Activated naive CD4-positive, alpha-beta T cell treated with anti-CD3 and anti-CD28 coated beads for 36 hours (primary cell): ENCODE measurements at regions of chr12 and their contacts with region 1.

Region 1: DNA sequence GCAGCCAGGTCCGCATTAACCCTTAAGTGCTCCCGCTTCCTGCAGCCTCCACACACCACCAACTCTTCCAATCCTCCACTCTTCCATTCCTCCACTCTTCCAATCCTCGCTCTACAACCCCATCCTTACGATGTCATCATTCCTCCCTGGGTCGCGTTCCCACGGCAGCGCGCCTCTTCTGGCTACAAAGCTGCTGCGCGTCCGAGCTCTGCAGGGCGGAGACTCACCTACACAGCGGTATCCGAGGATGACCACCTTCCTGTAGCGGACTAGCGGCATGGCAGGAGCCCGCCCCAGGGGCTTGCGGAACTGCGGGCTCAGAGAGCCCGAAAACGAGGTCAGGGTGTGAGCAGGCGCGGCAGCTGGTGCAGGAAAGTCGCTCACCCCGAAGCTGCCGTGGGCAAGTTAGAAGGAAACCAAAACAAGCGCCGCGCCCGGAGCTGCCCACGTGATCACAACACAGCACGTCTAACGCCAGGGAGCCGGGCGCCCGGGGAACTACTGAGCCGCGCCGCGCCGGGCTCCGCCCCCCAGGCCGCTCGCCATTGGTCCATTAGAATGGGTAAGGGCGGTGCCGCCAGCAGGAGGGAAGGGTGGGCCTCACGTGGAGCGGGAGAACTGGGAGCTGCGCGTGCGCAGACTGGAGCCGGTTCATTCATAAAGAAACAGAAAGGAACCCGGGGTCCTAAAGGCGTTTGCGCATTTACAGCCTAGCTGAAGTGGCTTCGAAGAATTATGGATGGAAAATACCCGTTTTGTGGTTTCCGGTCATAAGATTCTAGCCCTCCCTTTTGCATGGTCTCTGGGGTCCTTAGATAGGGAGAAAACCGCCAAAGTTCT is at the start of gene RHEBL1:
- DNase-seq: peak; percentile 100
- H3K4me3 Mint-ChIP-seq: peak within 1 kb of the TSS; percentile 99
- H3K27ac Mint-ChIP-seq: peak within 1 kb of the TSS; percentile 76
- H3K4me1 Mint-ChIP-seq: peaks cover 12% of the 10 kb centered on the region
- H3K27me3 Mint-ChIP-seq: no peaks in the 10 kb centered on the region
- total RNA-seq, gene RHEBL1: 11.8 to 15.2 TPM

Region 2: DNA sequence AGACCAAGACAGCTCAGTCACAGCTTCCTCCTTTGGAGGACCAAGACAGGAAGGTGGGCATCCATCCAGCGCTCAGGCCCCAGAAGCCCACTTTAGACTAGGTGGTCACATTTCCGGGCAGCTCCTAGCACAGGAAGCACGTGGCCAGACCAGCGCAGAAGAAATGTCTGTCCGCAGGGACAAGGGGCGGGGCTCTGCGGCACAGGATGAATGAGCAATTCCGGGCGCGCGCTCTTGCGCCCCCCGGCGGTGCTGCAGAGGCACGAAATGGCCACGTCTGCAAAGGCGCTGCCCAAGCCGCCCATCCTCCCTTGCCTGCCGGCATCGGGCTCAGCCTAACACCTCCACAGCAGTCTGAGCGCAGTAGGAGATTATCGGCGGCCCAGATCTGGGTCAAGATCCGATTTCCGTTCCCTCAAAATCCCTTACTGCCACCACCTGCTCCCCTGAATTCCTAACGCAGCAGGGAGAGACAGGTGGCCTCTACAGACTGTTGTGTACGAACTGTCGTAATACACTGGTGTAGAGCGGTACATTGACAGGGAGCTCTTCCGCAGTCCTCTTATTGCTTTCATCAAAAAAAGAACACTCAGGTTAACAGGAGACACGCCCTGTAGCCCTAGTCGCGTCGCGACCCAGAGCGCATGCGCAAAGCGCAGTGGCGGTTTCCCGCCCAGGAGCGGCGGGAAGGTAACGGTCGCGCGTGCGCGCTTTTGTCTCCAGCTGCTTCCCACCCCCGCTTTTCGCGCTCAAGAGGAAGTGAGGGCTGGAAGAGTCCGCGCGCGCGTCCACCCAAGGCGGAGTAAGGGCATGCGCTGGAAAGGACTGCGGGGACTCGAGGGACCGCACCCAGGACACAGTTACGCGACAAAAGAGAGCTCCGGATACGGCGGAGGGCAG is 60.7 kb after region 1 on chr12:
- CTCF ChIA-PET with region 1: interaction called, 4 read pairs
- intact Hi-C with region 1: loop called (anchors 1 kb)
- DNase-seq: peak; percentile 96
- H3K4me3 Mint-ChIP-seq: peak overlapping the region; percentile 97
- H3K27ac Mint-ChIP-seq: peak overlapping the region; percentile 100
- H3K4me1 Mint-ChIP-seq: peaks cover 43% of the 10 kb centered on the region
- H3K27me3 Mint-ChIP-seq: no peaks in the 10 kb centered on the region